CD8-positive, alpha-beta T cell (primary cell): ENCODE measurements at regions of chr3 and their contacts with region 1.

Region 1: DNA sequence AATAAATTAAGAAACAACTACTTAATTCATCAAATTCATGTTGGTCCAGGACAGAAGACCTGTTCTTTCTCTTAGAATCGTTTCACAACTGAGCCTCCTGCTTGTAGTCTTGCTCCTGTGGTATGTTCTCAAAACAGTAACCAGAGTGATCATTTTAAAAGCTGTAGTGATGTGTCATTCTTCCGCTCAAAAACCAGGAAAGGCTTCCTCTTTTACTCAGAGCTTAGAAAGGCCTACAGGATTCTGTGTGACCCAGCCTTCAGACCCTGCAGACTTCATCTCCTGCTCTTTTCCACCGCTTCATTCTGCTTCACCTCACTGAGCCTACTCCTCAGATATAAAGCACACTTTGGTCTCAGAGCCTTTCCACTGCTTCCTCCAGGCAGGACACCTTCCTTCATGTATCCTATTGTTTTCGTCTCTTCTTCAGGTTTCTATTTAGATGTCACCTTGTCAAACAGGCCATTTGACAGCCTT is 22.7 kb downstream of the ST6GAL1 start:
- DNase-seq: no peak
- ATAC-seq: peak; percentile 26
- H3K4me3 ChIP-seq: no peak overlapping the region
- H3K4me3 Mint-ChIP-seq: peak overlapping the region; percentile 27
- H3K27ac ChIP-seq: peak overlapping the region in 1 of 2 experiments; percentile 13
- H3K27ac Mint-ChIP-seq: peak overlapping the region; percentile 85
- H3K4me1 ChIP-seq: peaks cover 25% of the 10 kb centered on the region
- H3K4me1 Mint-ChIP-seq: peaks cover 81% of the 10 kb centered on the region
- H3K27me3 ChIP-seq: no peaks in the 10 kb centered on the region
- H3K27me3 Mint-ChIP-seq: no peaks in the 10 kb centered on the region
- CTCF ChIP-seq: no peak

Region 2: GRCh38 chr3:186929186-186929585 is 23.9 kb before region 1 on chr3:
- CTCF ChIA-PET with region 1: no interaction called
- POLR2A ChIA-PET with region 1: no interaction called
- intact Hi-C with region 1: no loop called
- DNase-seq: peak in 1 of 9 experiments; percentile 7
- ATAC-seq: no peak
- H3K4me3 ChIP-seq: no peak overlapping the region
- H3K4me3 Mint-ChIP-seq: peak overlapping the region; percentile 52
- H3K27ac ChIP-seq: no peak overlapping the region
- H3K27ac Mint-ChIP-seq: peak overlapping the region; percentile 5
- H3K4me1 ChIP-seq: peaks cover 17% of the 10 kb centered on the region
- H3K4me1 Mint-ChIP-seq: peaks cover 31% of the 10 kb centered on the region
- H3K27me3 ChIP-seq: no peaks in the 10 kb centered on the region
- H3K27me3 Mint-ChIP-seq: no peaks in the 10 kb centered on the region
- CTCF ChIP-seq: no peak

Region 3: DNA sequence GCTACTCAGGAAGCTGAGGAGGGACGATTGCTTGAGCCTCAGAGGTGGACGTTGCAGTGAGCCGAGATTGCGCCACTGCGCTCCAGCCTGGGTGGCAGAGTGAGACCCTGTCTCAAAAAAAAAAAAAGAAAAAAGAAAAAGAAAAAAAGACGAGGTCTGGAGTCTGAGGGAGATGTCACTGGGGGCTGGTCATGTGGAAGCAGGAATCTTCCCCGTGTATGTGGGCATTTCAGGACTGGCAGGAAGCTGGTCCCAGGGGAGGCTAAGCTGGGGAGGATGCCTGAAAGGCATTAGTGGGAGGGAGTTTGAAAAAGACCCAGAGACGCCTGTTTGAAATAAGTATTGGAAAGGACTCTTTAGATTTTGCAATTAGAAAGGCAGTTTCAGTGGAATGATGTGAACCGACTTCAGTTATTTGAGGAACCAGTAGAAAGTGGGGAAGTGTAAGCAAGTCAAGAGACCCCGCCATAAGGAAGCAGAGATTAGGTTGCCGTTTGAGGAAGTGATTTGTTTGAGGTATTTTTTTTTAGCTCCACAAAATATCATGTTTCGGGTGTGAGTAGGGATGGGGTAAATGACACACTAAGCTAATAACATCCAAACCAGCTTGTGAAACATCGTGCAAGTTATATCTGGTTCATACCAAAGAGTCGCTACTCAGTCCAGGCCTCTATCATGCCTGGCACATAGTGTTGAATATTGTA is 32.8 kb after region 1 on chr3:
- CTCF ChIA-PET with region 1: no interaction called
- POLR2A ChIA-PET with region 1: no interaction called
- intact Hi-C with region 1: loop called in 1 of 2 experiments (anchors 5 kb)
- DNase-seq: peak in 1 of 9 experiments; percentile 11
- ATAC-seq: no peak
- H3K4me3 ChIP-seq: no peak overlapping the region
- H3K4me3 Mint-ChIP-seq: no peak overlapping the region
- H3K27ac ChIP-seq: no peak overlapping the region
- H3K27ac Mint-ChIP-seq: peak overlapping the region; percentile 72
- H3K4me1 ChIP-seq: peaks cover 3% of the 10 kb centered on the region
- H3K4me1 Mint-ChIP-seq: peaks cover 48% of the 10 kb centered on the region
- H3K27me3 ChIP-seq: no peaks in the 10 kb centered on the region
- H3K27me3 Mint-ChIP-seq: no peaks in the 10 kb centered on the region
- CTCF ChIP-seq: no peak

Region 4: DNA sequence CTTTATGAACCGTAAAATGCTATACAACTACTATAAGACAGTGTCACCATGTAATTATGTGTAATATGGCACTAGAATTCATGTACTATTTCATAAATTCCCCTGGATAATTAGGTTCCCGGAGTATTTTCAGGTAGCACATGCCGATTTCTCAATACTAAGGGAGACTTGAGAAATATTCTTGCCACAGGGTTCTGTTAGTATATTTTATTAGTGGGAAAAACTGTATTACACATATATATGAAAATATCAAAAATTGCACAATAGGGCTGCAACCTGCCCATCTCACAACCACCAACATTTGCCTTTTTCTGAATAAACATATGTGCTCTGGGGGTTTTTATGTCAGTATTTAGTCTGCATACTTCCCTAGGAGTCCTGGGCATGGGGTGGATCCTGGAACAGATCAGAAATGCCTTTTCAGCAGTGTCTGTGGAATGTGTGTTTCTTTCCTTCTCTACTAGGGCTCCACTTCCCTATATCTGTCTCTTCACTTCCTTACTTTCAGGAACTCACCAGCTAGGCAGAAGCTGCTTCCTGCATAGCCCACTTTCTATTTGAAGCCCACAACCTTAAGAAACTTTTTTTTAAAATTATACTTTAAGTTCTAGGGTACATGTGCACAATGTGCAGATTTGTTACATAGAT is 98.8 kb after region 1 on chr3:
- CTCF ChIA-PET with region 1: no interaction called
- POLR2A ChIA-PET with region 1: no interaction called
- intact Hi-C with region 1: loop called in 1 of 2 experiments (anchors 5 kb)
- DNase-seq: no peak
- ATAC-seq: no peak
- H3K4me3 ChIP-seq: no peak overlapping the region
- H3K4me3 Mint-ChIP-seq: no peak overlapping the region
- H3K27ac ChIP-seq: no peak overlapping the region
- H3K27ac Mint-ChIP-seq: no peak overlapping the region
- H3K4me1 ChIP-seq: peaks cover 46% of the 10 kb centered on the region
- H3K4me1 Mint-ChIP-seq: peaks cover 66% of the 10 kb centered on the region
- H3K27me3 ChIP-seq: no peaks in the 10 kb centered on the region
- H3K27me3 Mint-ChIP-seq: no peaks in the 10 kb centered on the region
- CTCF ChIP-seq: no peak